Prostate gland (tissue), 2 donors: ENCODE measurements at regions of chr6 and their contacts with region 1.

Region 1: DNA sequence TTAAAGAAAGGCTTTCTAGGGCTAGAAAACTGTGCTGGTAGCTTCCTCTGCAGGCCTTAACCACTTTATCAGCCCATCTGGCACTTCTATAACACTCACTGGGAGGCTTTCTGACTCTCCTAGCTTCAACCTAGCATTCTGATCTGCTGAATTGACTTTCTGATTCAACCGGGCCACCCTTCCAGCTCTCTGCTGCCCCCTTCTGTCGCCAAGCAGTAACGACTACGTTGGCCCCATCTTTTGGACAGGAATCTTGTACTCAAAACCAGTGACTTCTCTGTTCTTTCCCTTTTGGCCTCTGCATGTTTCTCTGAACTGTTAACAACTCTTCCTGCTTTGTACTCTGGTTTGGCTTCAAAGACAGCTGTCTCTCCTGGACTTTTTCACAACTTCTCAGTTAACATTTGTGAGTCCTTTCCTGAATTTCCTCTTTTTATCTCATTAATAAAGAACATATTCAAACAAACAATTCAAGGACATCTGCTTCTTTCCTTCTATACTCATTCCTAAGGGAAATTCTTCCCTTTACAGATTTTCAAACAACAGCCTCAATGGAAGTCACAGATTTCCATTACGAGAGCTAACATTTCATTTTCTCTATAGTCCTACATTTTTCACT is 43.9 kb upstream of the FAM135A start:
- DNase-seq: peak; percentile 54
- H3K4me3 ChIP-seq: no peak overlapping the region
- H3K27ac ChIP-seq: no peak overlapping the region
- H3K4me1 ChIP-seq: no peaks in the 10 kb centered on the region
- H3K27me3 ChIP-seq: no peaks in the 10 kb centered on the region
- CTCF ChIP-seq: peak; percentile 61 to 80 (median 78)
- POLR2A ChIP-seq: no peak

Region 2: DNA sequence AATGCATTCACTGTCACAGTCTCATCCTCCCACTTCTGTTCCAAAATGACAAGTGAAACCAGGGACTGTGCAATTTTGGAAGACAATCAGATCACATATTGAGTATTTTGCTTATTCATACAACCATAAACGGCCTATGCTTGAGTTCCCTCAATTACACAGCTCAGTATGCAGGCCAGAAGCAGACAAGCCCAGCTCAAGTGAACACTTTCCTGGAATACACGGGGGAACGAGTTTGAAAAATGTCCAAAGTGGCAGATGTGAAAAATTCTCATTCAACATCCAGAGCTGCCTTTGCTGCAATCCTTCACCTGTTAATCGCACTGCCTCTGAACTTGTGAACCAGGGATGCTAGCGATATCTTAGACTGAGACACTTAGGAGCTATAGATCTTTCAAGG is 256.7 kb before region 1 on chr6:
- intact Hi-C with region 1: no loop called
- DNase-seq: no peak
- H3K4me3 ChIP-seq: no peak overlapping the region
- H3K27ac ChIP-seq: no peak overlapping the region
- H3K4me1 ChIP-seq: no peaks in the 10 kb centered on the region
- H3K27me3 ChIP-seq: no peaks in the 10 kb centered on the region
- CTCF ChIP-seq: no peak
- POLR2A ChIP-seq: no peak

Region 3: DNA sequence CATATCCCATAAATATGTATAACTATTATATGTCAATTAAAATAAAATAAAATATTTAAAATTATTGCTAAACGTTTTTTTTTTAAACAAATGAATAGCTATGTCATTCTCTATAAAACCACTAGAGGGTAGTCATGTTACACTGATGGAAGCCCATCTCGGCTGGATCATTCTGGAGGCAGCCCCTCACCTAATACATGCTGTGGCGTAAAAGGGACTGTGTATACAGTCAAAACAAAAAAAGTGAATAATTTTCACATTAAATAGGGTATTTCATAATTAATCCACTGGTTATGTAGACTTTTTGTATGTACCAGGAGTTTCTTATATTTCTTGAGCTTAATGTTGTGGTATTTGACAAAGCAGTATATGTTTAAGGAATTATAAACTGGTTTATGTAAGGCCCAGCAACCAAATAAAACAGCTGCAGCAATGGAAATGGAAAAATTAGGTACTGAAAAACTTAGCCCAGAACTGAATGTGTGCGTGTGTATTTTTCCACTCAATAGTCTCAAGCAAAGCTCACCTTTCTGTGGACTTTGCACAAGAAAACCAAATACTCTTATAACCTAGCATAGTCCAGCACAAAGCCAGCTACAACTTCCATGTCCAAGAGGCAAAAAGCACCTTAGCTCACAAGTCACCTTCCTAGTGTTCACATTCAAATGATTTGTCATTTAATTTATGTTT is 148.3 kb before region 1 on chr6:
- intact Hi-C with region 1: loop called (anchors 5 kb)
- DNase-seq: no peak
- H3K4me3 ChIP-seq: no peak overlapping the region
- H3K27ac ChIP-seq: no peak overlapping the region
- H3K4me1 ChIP-seq: peaks cover 6% of the 10 kb centered on the region
- H3K27me3 ChIP-seq: no peaks in the 10 kb centered on the region
- CTCF ChIP-seq: peak; percentile 54 to 77 (median 66)
- POLR2A ChIP-seq: no peak

Region 4: GRCh38 chr6:70304616-70305015 is 64.8 kb before region 1 on chr6:
- intact Hi-C with region 1: loop called (anchors 5 kb)
- DNase-seq: no peak
- H3K4me3 ChIP-seq: no peak overlapping the region
- H3K27ac ChIP-seq: no peak overlapping the region
- H3K4me1 ChIP-seq: no peaks in the 10 kb centered on the region
- H3K27me3 ChIP-seq: no peaks in the 10 kb centered on the region
- CTCF ChIP-seq: no peak
- POLR2A ChIP-seq: no peak

Region 5: DNA sequence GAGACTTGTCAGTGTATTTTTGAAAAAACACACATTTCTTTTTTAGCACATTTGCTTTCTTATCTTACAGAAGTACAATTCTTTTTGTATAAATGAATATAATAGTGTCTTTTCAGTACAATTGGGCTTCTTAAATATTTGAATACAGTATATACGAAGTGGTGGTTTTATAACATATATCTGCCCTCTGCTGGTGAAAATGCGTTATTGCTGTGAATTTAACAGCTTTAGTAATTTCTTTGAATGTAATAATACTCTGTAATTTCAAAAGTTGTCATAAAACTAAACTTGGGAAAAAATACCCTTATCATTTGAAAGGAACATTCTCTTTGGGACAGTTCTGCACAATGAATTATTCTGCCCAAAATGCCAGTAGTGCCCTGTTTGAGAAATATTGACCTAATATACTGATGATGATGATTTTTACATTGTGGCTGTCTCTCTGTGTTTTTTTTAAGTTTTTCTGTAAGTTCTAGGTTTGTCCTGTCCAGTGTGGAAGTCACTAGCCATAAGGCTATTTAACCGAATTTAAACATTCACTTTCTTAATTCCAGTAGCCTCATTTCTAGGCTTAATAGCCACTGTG is 317.2 kb after region 1 on chr6:
- intact Hi-C with region 1: loop called (anchors 5 kb)
- DNase-seq: peak; percentile 36
- H3K4me3 ChIP-seq: no peak overlapping the region
- H3K27ac ChIP-seq: no peak overlapping the region
- H3K4me1 ChIP-seq: peaks cover 2% of the 10 kb centered on the region
- H3K27me3 ChIP-seq: no peaks in the 10 kb centered on the region
- CTCF ChIP-seq: peak; percentile 26 to 83 (median 81)
- POLR2A ChIP-seq: no peak